Aorta (tissue), 5 donors: ENCODE measurements at regions of chr20 and their contacts with region 1.

Region 1: GRCh38 chr20:50283922-50284599 is 93.4 kb downstream of the CEBPB start:
- DNase-seq: peak in 1 of 2 donors; percentile 71
- ATAC-seq: peak; percentile 13
- H3K4me3 ChIP-seq: no peak overlapping the region
- H3K27ac ChIP-seq: no peak overlapping the region
- H3K4me1 ChIP-seq: no peaks in the 10 kb centered on the region
- H3K27me3 ChIP-seq: no peaks in the 10 kb centered on the region

Region 2: DNA sequence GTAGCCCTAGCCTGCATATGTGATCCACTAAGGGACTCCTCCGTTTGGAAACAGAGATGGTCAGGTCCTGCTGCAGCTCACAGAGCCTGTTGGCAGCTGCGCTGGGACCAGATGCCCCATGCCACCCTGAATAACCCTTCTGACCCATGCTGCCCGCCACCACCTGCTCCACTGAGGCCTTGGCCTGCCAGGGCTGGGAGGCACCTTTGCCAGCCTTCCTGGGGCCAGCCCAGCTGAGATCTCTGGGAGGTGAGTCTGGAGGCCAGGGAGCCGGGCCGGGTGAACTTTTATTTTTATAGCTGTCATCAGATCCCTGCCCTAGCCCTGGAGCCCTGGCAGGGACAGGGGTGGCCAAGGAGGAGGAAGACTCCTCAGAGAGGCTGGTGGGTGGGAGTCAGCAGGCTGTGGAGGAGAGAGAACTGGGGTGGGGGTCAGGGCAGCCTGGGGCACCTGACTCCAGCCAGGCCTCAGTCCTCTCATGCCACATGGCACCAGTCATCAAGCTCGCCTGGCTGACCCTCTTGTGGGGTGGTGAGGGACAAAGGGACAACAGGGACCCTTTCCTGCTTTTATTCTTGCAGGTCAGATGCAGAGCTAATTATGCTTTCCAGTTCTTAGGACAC is 83.5 kb before region 1 on chr20:
- intact Hi-C with region 1: loop called (anchors 5 to 10 kb)
- DNase-seq: peak in 1 of 2 donors; percentile 17
- ATAC-seq: no peak
- H3K4me3 ChIP-seq: no peak overlapping the region
- H3K27ac ChIP-seq: no peak overlapping the region
- H3K4me1 ChIP-seq: no peaks in the 10 kb centered on the region
- H3K27me3 ChIP-seq: no peaks in the 10 kb centered on the region

Region 3: DNA sequence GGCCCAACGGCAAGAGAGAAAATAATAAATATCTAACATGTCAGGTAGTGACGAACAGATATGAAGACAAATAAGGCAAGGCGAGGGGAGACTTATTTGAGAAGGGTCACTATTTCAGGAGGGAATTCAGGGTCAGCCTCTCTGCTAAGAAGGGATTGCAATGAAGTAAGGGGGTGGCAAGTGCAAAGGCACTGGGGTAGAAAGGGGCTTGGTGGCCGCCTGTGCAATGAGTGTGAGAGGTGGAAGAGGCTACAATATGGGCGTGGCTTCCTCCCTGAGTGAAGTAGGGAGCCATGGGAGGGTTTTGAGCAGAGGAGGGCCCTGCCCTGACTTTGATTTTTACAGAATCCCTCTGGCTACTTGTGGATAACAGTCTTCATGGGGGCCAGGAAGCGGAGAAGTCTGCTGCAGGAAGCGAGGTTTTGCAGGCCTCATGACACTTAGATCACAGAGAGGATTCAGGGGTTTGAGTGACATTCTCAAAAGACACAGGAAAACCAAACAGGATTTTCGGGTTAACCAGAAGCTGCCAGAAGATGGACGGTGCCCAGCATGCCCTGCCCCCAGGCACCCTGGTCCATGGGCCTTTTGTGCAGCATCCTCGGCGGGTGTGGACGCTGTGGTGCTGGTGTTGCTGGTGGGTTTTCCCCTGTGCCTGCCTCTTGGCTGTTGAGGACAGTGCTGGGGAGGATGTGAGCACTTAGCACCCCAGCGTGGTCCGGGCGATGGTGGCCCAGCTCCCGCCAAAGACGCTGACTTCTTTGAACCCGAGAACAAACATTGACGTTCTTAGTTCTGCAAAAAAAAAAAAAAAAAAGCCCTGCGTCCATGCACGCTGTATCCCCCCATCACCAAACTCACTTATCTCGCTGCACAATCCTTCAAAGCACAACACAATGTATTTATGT is 101.9 kb after region 1 on chr20:
- intact Hi-C with region 1: no loop called
- DNase-seq: peak in 1 of 2 donors; percentile 71
- ATAC-seq: no peak
- H3K4me3 ChIP-seq: no peak overlapping the region
- H3K27ac ChIP-seq: no peak overlapping the region
- H3K4me1 ChIP-seq: peaks cover 0 to 5% of the 10 kb centered on the region in 2 donors
- H3K27me3 ChIP-seq: no peaks in the 10 kb centered on the region